Natural killer cell (primary cell): ENCODE measurements at regions of chr9 and their contacts with region 1.

Region 1: GRCh38 chr9:129413537-129414376 is 207.1 kb downstream of the C9orf50 start:
- DNase-seq: peak; percentile 99
- ATAC-seq: peak; percentile 74 to 90 (median 83)
- H3K4me3 ChIP-seq: peak overlapping the region; percentile 71
- H3K4me3 Mint-ChIP-seq: peak overlapping the region; percentile 83
- H3K27ac ChIP-seq: peak overlapping the region; percentile 100
- H3K27ac Mint-ChIP-seq: peak overlapping the region; percentile 80 to 99
- H3K4me1 ChIP-seq: peaks cover 47% of the 10 kb centered on the region
- H3K4me1 Mint-ChIP-seq: peaks cover 17 to 50% of the 10 kb centered on the region in 2 donors
- H3K27me3 ChIP-seq: no peaks in the 10 kb centered on the region
- H3K27me3 Mint-ChIP-seq: peaks cover 0 to 7% of the 10 kb centered on the region in 2 donors
- CTCF ChIP-seq: no peak

Region 2: GRCh38 chr9:129436751-129437625 is 23.2 kb after region 1 on chr9:
- intact Hi-C with region 1: no loop called
- DNase-seq: peak in 1 of 2 donors; percentile 71
- ATAC-seq: peak; percentile 58 to 75 (median 71)
- H3K4me3 ChIP-seq: peak overlapping the region; percentile 29
- H3K4me3 Mint-ChIP-seq: peak overlapping the region; percentile 81
- H3K27ac ChIP-seq: no peak overlapping the region
- H3K27ac Mint-ChIP-seq: peak overlapping the region in 1 of 2 donors; percentile 76
- H3K4me1 ChIP-seq: peaks cover 36% of the 10 kb centered on the region
- H3K4me1 Mint-ChIP-seq: peaks cover 41 to 42% of the 10 kb centered on the region in 2 donors
- H3K27me3 ChIP-seq: peaks cover 29% of the 10 kb centered on the region
- H3K27me3 Mint-ChIP-seq: peaks cover 32 to 42% of the 10 kb centered on the region in 2 donors
- CTCF ChIP-seq: no peak

Region 3: DNA sequence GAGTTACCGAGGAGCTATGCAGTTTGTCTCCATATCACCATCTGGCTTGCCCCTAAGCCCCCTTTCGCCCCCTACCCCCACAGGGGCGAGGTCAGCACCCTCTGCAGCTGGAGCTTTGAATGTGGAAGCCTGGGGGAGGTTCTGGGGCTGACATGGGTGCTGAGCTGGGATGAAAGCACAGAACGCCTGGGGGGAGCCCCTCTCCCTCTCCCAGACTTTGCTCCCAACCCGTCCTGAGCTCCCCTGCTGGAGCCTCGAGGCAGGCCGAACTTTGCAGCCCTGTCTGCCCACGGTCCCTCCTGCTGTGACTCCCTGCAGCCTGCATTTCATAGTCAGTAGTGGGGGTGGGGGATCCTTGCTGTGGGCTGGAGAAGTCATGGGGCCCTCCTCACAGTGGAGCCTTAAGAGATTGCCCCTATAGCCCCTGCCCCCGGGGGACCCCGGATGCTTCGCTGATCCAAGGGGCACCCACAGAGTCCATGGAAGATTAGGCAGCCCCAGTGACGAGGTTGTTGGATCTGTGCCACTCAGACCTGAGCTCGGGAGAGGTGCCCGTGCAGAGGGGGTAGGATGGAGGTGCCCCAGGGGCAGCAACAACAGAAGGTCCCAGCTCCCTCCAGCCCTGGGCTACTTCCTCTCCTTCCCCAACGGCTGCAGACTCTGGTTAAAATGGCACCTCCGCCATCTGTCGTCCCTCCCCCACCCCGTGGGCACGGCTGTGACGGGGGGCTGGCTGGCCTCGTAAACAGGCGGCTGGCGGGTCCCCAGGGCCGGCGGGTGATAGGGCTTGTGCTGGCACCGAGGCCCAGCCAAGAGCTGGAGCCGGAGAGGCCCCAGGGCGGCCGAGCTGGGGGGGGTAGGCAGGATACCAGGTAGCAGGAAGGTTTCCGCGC is 45.2 kb after region 1 on chr9:
- intact Hi-C with region 1: loop called (anchors 1 kb)
- DNase-seq: peak; percentile 53 to 61
- ATAC-seq: peak; percentile 17 to 28 (median 19)
- H3K4me3 ChIP-seq: no peak overlapping the region
- H3K4me3 Mint-ChIP-seq: peak overlapping the region; percentile 65
- H3K27ac ChIP-seq: peak overlapping the region; percentile 90
- H3K27ac Mint-ChIP-seq: peak overlapping the region; percentile 88 to 96
- H3K4me1 ChIP-seq: peaks cover 61% of the 10 kb centered on the region
- H3K4me1 Mint-ChIP-seq: peaks cover 28 to 60% of the 10 kb centered on the region in 2 donors
- H3K27me3 ChIP-seq: no peaks in the 10 kb centered on the region
- H3K27me3 Mint-ChIP-seq: no peaks in the 10 kb centered on the region
- CTCF ChIP-seq: no peak

Region 4: GRCh38 chr9:129487642-129488409 is 74.1 kb after region 1 on chr9:
- intact Hi-C with region 1: loop called (anchors 2 kb)
- DNase-seq: peak in 1 of 2 donors; percentile 76
- ATAC-seq: peak in 2 of 3 donors; percentile 4 to 35
- H3K4me3 ChIP-seq: peak overlapping the region; percentile 42
- H3K4me3 Mint-ChIP-seq: peak overlapping the region; percentile 82
- H3K27ac ChIP-seq: peak overlapping the region; percentile 80
- H3K27ac Mint-ChIP-seq: peak overlapping the region; percentile 85 to 92
- H3K4me1 ChIP-seq: peaks cover 53% of the 10 kb centered on the region
- H3K4me1 Mint-ChIP-seq: peaks cover 20 to 39% of the 10 kb centered on the region in 2 donors
- H3K27me3 ChIP-seq: peaks cover 10% of the 10 kb centered on the region
- H3K27me3 Mint-ChIP-seq: peaks cover 7 to 13% of the 10 kb centered on the region in 2 donors
- CTCF ChIP-seq: no peak

Region 5: DNA sequence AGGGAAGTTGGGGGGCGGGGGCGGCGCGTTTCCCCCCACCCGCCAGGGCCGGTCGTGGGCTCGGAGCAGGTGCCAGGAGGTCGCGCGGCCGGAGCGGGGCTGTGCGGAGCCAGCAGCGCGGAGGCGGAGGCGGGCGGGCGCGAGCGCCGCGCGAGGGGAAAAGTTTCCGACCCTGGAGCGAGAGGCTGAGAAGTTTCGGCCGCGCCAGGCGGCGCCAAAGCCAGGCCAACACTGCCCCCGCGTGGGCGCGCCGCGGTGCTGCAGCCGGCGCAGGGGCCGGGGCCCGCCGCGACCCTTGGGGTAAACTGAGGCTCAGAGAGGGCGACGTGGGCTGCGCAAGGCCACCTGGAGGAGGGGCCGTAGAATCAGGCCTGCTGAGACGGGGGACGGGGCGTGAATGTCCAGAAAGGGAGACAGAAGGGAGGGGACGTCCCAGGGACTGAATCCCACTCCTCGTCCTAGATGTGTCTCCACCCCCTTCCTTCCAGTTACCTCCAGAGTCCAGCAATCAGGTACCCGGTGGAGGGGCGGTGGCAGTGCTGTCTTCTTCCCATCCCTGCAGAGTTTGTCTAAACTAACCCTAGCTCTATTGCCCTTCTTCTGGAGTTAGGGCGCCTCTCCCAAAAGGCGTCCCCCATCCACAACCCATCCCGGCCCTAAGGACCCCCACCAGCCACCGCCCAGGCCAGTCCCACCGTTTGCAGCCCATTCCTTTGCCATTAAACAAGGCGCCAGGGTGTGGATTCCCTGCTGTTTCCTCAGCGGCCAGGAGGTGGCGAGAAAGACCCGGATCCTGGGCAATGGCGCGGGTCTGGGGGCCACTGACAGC is 196.9 kb after region 1 on chr9:
- intact Hi-C with region 1: loop called (anchors 2 kb)
- DNase-seq: peak; percentile 71 to 85
- ATAC-seq: peak; percentile 72 to 87 (median 78)
- H3K4me3 ChIP-seq: peak overlapping the region; percentile 33
- H3K4me3 Mint-ChIP-seq: peak overlapping the region; percentile 62
- H3K27ac ChIP-seq: peak overlapping the region; percentile 37
- H3K27ac Mint-ChIP-seq: peak overlapping the region in 1 of 2 donors; percentile 96
- H3K4me1 ChIP-seq: peaks cover 43% of the 10 kb centered on the region
- H3K4me1 Mint-ChIP-seq: peaks cover 28 to 47% of the 10 kb centered on the region in 2 donors
- H3K27me3 ChIP-seq: no peaks in the 10 kb centered on the region
- H3K27me3 Mint-ChIP-seq: peaks cover 0 to 3% of the 10 kb centered on the region in 2 donors
- CTCF ChIP-seq: peak; percentile 98